Heart right ventricle (tissue), 16 donors: ENCODE measurements at regions of chr9 and their contacts with region 1.

Region 1: GRCh38 chr9:121954477-121955140 is 138.5 kb downstream of the TTLL11 start:
- DNase-seq: peak; percentile 15 to 27
- ATAC-seq: peak in 6 of 8 donors; percentile 61 to 86 (median 72)
- H3K4me3 ChIP-seq: no peak overlapping the region
- H3K27ac ChIP-seq: no peak overlapping the region
- H3K4me1 ChIP-seq: peaks cover 0 to 6% (median 0%) of the 10 kb centered on the region in 9 donors
- H3K27me3 ChIP-seq: no peaks in the 10 kb centered on the region
- CTCF ChIP-seq: no peak

Region 2: DNA sequence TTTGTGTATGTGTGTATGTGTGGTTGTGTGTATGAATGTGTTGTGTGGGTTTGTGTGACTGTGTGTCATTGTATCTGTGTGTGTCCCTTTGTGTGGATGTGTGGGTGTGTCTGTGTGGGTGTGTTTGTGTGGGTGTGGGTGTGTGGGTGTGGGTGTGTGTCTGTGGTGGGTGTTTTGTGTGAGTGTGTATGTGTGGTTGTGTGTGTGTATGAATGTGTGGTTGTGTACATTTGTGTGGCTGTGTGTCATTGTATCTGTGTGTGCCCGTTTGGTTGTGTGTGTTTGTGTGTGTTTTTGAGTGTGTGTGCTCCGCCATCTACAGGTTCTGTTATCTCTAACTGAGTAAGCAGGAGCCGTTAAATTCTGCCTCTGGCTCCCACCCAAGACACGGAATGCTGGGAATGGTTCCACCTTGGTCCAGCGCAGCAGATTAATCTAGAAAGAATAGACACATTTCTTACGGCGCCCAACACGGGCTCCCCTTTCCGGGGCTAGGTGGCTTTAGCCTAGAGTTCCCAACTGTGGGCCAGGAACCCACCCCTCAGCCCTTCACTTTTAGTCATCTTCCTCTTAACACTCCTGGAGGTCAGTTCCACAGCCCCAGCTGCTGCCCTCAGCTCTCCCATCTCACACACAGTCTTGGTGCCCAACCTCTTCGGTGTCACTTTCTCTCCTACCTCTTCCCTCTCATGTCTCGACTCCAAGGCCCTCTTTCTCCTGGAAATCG is 58.6 kb before region 1 on chr9:
- intact Hi-C with region 1: loop called in 1 of 10 experiments (anchors 10 kb)
- DNase-seq: peak; percentile 24 to 28
- ATAC-seq: peak in 5 of 8 donors; percentile 22 to 67 (median 55)
- H3K4me3 ChIP-seq: no peak overlapping the region
- H3K27ac ChIP-seq: no peak overlapping the region
- H3K4me1 ChIP-seq: peaks cover 0 to 12% (median 7%) of the 10 kb centered on the region in 9 donors
- H3K27me3 ChIP-seq: no peaks in the 10 kb centered on the region
- CTCF ChIP-seq: peak in 1 of 9 donors; percentile 14